Heart right ventricle (tissue), 16 donors: ENCODE measurements at regions of chr2 and their contacts with region 1.

Region 1: DNA sequence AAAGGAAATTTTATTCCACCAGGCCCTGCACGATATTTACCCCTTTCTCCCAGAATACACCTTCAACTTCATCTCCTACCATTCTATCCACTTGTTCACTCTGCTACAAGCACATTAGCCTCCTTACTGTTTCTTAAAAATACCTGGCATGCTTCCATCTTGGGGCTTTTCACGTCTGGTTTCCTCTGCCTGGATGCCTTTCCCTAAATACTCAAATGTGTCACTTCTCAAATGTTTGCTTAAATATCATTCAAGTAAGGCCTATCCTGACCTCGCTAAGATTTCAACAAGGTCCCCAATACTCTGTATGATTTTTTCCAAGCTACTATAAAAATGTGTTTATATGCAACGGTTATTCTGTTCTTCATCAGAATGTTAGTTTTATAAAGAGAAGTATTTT is 433.0 kb upstream of the CHAC2 start:
- DNase-seq: no peak
- ATAC-seq: no peak
- H3K4me3 ChIP-seq: no peak overlapping the region
- H3K27ac ChIP-seq: no peak overlapping the region
- H3K4me1 ChIP-seq: peaks cover 0 to 3% (median 0%) of the 10 kb centered on the region in 9 donors
- H3K27me3 ChIP-seq: no peaks in the 10 kb centered on the region
- CTCF ChIP-seq: no peak

Region 2: GRCh38 chr2:51484605-51485004 is 1850.0 kb before region 1 on chr2:
- intact Hi-C with region 1: loop called in 1 of 10 experiments (anchors 5 kb)
- DNase-seq: no peak
- ATAC-seq: no peak
- H3K4me3 ChIP-seq: no peak overlapping the region
- H3K27ac ChIP-seq: no peak overlapping the region
- H3K4me1 ChIP-seq: no peaks in the 10 kb centered on the region
- H3K27me3 ChIP-seq: no peaks in the 10 kb centered on the region
- CTCF ChIP-seq: no peak

Region 3: DNA sequence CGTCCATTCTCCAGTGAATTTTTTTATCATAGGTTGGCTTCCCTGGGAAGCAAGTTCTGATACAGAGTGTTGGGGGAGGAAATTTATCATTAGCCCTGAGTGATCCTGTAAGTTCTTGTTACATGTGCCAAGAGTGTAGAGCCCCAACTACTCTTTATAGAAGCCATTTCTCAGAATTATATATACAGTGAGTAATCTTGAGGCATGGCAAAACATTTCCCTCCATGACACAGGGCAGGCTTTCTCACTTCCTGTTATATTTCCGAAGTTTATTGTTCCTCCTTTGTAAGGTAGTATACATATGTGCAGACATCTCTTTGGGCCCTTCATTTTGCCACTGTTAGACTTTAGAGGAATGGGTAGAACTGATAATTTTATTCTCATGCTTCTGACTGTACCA is 1817.9 kb before region 1 on chr2:
- intact Hi-C with region 1: loop called in 1 of 10 experiments (anchors 5 kb)
- DNase-seq: no peak
- ATAC-seq: no peak
- H3K4me3 ChIP-seq: no peak overlapping the region
- H3K27ac ChIP-seq: no peak overlapping the region
- H3K4me1 ChIP-seq: no peaks in the 10 kb centered on the region
- H3K27me3 ChIP-seq: no peaks in the 10 kb centered on the region
- CTCF ChIP-seq: no peak

Region 4: DNA sequence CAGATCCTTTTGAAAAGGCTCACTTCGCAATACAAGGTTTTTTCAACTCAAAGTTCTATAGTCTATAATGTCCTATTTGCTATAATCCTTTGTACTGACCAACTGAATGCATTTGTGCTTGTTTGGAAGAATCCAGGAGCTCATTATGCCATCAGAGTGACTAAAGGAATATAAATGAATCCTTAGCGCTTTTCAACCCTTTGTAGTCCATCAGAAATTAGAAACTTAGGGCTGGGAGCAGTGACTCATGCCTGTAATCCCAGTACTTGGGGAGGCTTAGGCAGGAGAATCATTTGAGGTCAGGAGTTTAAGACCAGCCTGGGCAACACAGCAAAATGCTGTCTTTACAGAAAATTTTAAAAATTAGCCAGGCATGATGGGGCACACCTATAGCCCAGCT is 102.8 kb after region 1 on chr2:
- intact Hi-C with region 1: no loop called
- DNase-seq: no peak
- ATAC-seq: no peak
- H3K4me3 ChIP-seq: no peak overlapping the region
- H3K27ac ChIP-seq: no peak overlapping the region
- H3K4me1 ChIP-seq: peaks cover 0 to 8% (median 0%) of the 10 kb centered on the region in 9 donors
- H3K27me3 ChIP-seq: no peaks in the 10 kb centered on the region
- CTCF ChIP-seq: no peak